ENCODE measurements at regions of chr7 and their contacts with region 1.

Region 1: GRCh38 chr7:45917658-45918057 is 3.4 kb downstream of the IGFBP3 start:
- DNase-seq: peak in 1 of 2 experiments; percentile 96
- H3K4me3 ChIP-seq: peak overlapping the region in 1 of 4 experiments; percentile 37; a peak in 2 of 8 replicates
- H3K27ac ChIP-seq: no peak overlapping the region
- H3K4me1 ChIP-seq: peaks cover 4 to 19% (median 5%) of the 10 kb centered on the region in 4 experiments; a peak in 6 of 7 replicates
- H3K27me3 ChIP-seq: peaks cover 14 to 45% (median 35%) of the 10 kb centered on the region in 4 experiments
- CTCF ChIP-seq: peak; percentile 87 to 93 (median 89)
- EP300 ChIP-seq: no peak
- POLR2A ChIP-seq: no peak
- RAD21 ChIP-seq: peak; percentile 83 to 86

Region 2: GRCh38 chr7:45897042-45897690 is 20.5 kb before region 1 on chr7:
- CTCF ChIA-PET with region 1: interaction called, 19 read pairs
- POLR2A ChIA-PET with region 1: no interaction called
- DNase-seq: no peak
- H3K4me3 ChIP-seq: no peak overlapping the region
- H3K27ac ChIP-seq: no peak overlapping the region
- H3K4me1 ChIP-seq: no peaks in the 10 kb centered on the region
- H3K27me3 ChIP-seq: peaks cover 0 to 4% (median 0%) of the 10 kb centered on the region in 4 experiments; a peak in 2 of 7 replicates
- CTCF ChIP-seq: no peak
- EP300 ChIP-seq: no peak
- POLR2A ChIP-seq: no peak
- RAD21 ChIP-seq: no peak

Region 3: DNA sequence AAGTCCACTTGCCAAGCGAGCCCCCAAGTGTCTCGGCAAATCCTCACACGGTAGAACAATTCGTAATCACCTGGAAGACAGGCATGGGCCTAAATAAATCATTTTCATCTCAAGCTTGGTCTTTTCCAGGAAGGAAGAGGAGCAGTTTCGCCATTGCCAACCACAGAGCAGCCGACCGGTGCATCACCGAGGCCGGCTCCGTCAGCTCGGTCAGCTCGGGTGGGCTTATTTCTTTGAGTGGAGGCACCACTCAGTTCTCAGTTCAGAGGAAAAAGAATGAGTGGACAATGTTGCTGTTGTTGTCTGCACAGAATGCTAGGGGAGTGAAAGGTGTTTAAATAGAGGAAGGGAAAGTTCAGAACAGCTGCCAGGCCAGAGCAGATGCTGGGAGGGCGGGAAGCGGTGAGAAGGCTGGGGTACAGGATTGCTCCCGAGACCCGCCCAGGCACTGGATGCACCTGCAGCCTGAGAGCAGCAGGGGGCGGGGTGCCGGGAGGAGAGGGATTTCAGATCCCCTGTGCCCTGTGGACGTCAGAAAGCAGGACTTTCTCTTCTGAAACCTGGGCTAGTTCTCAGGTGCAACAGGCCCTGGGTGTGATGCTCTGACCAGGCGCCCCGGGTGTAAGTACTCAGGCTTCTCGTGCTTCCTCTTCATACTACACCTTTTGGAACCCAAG is 21.1 kb after region 1 on chr7:
- CTCF ChIA-PET with region 1: interaction called, 80 read pairs
- POLR2A ChIA-PET with region 1: no interaction called
- DNase-seq: peak in 1 of 2 experiments; percentile 72
- H3K4me3 ChIP-seq: no peak overlapping the region
- H3K27ac ChIP-seq: no peak overlapping the region
- H3K4me1 ChIP-seq: no peaks in the 10 kb centered on the region
- H3K27me3 ChIP-seq: no peaks in the 10 kb centered on the region
- CTCF ChIP-seq: peak; percentile 50 to 70 (median 67)
- EP300 ChIP-seq: no peak
- POLR2A ChIP-seq: no peak
- RAD21 ChIP-seq: peak; percentile 55 to 66

Region 4: GRCh38 chr7:46357290-46357689 is 439.6 kb after region 1 on chr7:
- CTCF ChIA-PET with region 1: interaction called, 242 read pairs
- POLR2A ChIA-PET with region 1: interaction called, 3 read pairs
- DNase-seq: no peak
- H3K4me3 ChIP-seq: no peak overlapping the region
- H3K27ac ChIP-seq: no peak overlapping the region
- H3K4me1 ChIP-seq: peaks cover 0 to 4% (median 0%) of the 10 kb centered on the region in 4 experiments; a peak in 1 of 7 replicates
- H3K27me3 ChIP-seq: peaks cover 0 to 1% (median 0%) of the 10 kb centered on the region in 4 experiments; a peak in 1 of 7 replicates
- CTCF ChIP-seq: no peak
- EP300 ChIP-seq: no peak
- POLR2A ChIP-seq: no peak
- RAD21 ChIP-seq: no peak

Region 5: DNA sequence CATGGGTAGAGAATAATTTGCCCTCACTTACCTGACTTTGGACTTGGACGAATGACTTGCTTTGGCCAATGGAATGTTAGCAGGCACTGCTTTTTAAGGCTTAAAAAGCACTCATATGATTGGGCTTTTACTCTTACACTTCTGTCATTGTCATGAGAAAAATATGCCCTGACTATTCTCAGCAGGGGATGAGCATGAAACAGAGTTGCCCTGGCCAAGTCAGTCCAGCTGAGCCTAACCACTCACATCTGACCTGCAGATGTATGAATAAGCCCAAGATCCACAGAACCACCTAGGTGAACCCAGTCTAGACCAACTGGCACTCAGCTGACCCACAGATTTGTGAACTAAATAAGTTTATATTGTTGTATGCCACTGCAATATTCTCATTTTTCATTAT is 1090.8 kb after region 1 on chr7:
- CTCF ChIA-PET with region 1: no interaction called
- POLR2A ChIA-PET with region 1: no interaction called
- DNase-seq: no peak
- H3K4me3 ChIP-seq: no peak overlapping the region
- H3K27ac ChIP-seq: no peak overlapping the region
- H3K4me1 ChIP-seq: no peaks in the 10 kb centered on the region
- H3K27me3 ChIP-seq: no peaks in the 10 kb centered on the region
- CTCF ChIP-seq: no peak
- EP300 ChIP-seq: no peak
- POLR2A ChIP-seq: no peak
- RAD21 ChIP-seq: no peak

Measured in H1 (cell line).